Endothelial cell of umbilical vein (primary cell): ENCODE measurements at regions of chr2 and their contacts with region 1.

Region 1: GRCh38 chr2:36461039-36461681 is 105.6 kb downstream of the CRIM1 start:
- DNase-seq: peak; percentile 93
- H3K4me3 ChIP-seq: peak overlapping the region in 1 of 3 experiments; percentile 30
- H3K27ac ChIP-seq: peak overlapping the region; percentile 98
- H3K4me1 ChIP-seq: peaks cover 97% of the 10 kb centered on the region
- H3K27me3 ChIP-seq: no peaks in the 10 kb centered on the region
- CTCF ChIP-seq: no peak
- POLR2A ChIP-seq: peak; percentile 15

Region 2: DNA sequence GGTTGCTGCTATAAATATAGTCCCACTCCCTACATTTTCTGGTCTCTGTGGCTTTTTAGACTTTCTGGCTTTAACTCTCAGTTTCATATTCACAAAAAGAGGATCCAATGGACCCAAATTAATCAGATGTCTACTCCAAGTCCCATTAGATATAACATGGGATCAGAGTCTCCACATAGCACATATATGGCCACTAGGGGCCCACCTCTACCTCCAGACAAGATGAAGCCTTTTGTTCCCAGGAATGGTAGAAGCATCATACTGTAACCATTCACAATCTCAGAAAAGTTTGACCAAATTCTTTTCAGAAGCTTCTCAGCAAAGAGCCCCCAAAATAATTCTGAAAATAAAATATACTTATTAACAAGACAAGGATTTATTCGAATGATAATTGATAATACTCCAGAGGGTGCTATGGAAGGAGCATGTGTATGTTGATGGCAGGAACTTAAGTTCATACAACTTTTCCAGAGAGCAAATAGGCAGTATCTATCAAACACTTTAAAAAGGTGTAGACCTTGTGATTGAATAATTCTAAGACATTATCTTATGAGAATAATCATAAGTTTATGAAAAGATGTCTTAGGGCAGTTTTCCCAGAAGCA is 487.9 kb before region 1 on chr2:
- CTCF ChIA-PET with region 1: no interaction called
- POLR2A ChIA-PET with region 1: no interaction called
- dilution Hi-C with region 1: no loop called
- intact Hi-C with region 1: loop called (anchors 10 kb)
- DNase-seq: peak; percentile 78
- H3K4me3 ChIP-seq: no peak overlapping the region
- H3K27ac ChIP-seq: peak overlapping the region; percentile 64
- H3K4me1 ChIP-seq: peaks cover 8% of the 10 kb centered on the region
- H3K27me3 ChIP-seq: no peaks in the 10 kb centered on the region
- CTCF ChIP-seq: peak; percentile 45 to 67
- POLR2A ChIP-seq: no peak

Region 3: GRCh38 chr2:36376319-36376765 is 84.8 kb before region 1 on chr2:
- CTCF ChIA-PET with region 1: interaction called, 41 read pairs
- POLR2A ChIA-PET with region 1: interaction called, 3 read pairs
- dilution Hi-C with region 1: no loop called
- intact Hi-C with region 1: loop called (anchors 2 kb)
- DNase-seq: peak; percentile 65
- H3K4me3 ChIP-seq: no peak overlapping the region
- H3K27ac ChIP-seq: peak overlapping the region; percentile 44
- H3K4me1 ChIP-seq: peaks cover 98% of the 10 kb centered on the region
- H3K27me3 ChIP-seq: no peaks in the 10 kb centered on the region
- CTCF ChIP-seq: no peak
- POLR2A ChIP-seq: no peak

Region 4: DNA sequence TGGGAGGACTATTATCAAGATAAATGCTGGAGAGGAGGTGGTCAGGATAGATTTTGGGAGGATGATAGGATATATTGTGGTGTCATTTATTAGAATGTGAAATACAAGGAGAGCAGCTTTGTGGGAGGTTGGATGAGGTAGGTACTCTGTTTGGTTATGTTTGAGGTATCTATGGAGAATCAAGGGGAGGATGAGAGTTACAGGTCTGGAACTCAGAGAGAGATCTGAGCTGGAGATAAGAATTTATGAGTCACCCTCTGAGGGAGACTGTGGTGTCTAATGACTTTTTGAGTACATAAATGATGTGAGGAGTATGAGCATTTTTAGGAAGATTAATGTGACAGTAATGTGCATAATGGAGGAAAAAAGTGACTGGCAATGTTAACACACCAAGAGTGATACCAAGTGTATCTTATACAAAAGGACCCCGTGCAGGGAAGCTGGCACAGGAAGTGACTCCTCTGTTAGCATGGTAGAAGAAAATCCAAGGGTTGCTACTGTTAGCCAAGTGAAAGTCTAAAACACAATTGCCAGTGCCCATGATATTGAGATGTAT is 57.4 kb before region 1 on chr2:
- CTCF ChIA-PET with region 1: interaction called, 16 read pairs
- POLR2A ChIA-PET with region 1: no interaction called
- dilution Hi-C with region 1: no loop called
- intact Hi-C with region 1: loop called (anchors 1 kb)
- DNase-seq: peak; percentile 79
- H3K4me3 ChIP-seq: no peak overlapping the region
- H3K27ac ChIP-seq: peak overlapping the region; percentile 92
- H3K4me1 ChIP-seq: peaks cover 96% of the 10 kb centered on the region
- H3K27me3 ChIP-seq: no peaks in the 10 kb centered on the region
- CTCF ChIP-seq: no peak
- POLR2A ChIP-seq: peak; percentile 64

Region 5: GRCh38 chr2:36433311-36434217 is 27.6 kb before region 1 on chr2:
- CTCF ChIA-PET with region 1: interaction called, 14 read pairs
- POLR2A ChIA-PET with region 1: interaction called, 3 read pairs
- dilution Hi-C with region 1: no loop called
- intact Hi-C with region 1: no loop called
- DNase-seq: no peak
- H3K4me3 ChIP-seq: no peak overlapping the region
- H3K27ac ChIP-seq: no peak overlapping the region
- H3K4me1 ChIP-seq: peaks cover 89% of the 10 kb centered on the region
- H3K27me3 ChIP-seq: no peaks in the 10 kb centered on the region
- CTCF ChIP-seq: no peak
- POLR2A ChIP-seq: peak; percentile 4

Region 6: DNA sequence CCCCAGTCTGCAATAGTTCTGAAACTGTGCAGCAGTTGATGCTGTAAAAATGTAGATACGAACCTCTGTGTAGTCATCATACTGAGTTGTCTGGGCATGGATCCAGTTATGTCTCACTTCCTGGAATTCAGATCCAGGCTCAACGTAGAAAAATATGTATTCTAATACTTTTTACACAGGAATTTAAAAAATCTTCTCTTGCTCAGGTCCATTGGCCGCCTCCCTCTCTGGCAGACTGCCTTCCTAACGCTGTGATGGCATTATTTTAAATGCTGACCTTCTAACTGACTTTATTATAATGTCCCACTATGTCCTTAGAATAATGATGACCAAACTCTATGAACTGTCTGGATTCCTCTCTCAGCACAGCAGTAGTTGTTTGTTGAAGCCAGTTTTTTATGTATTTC is 17.2 kb after region 1 on chr2:
- CTCF ChIA-PET with region 1: interaction called, 24 read pairs
- POLR2A ChIA-PET with region 1: no interaction called
- dilution Hi-C with region 1: no loop called
- intact Hi-C with region 1: loop called (anchors 1 kb)
- DNase-seq: peak; percentile 96
- H3K4me3 ChIP-seq: no peak overlapping the region
- H3K27ac ChIP-seq: peak overlapping the region; percentile 82
- H3K4me1 ChIP-seq: peaks cover 73% of the 10 kb centered on the region
- H3K27me3 ChIP-seq: no peaks in the 10 kb centered on the region
- CTCF ChIP-seq: no peak
- POLR2A ChIP-seq: no peak

Region 7: GRCh38 chr2:36507408-36507812 is 46.2 kb after region 1 on chr2:
- CTCF ChIA-PET with region 1: interaction called, 11 read pairs
- POLR2A ChIA-PET with region 1: no interaction called
- dilution Hi-C with region 1: no loop called
- intact Hi-C with region 1: no loop called
- DNase-seq: peak; percentile 64
- H3K4me3 ChIP-seq: no peak overlapping the region
- H3K27ac ChIP-seq: no peak overlapping the region
- H3K4me1 ChIP-seq: no peaks in the 10 kb centered on the region
- H3K27me3 ChIP-seq: no peaks in the 10 kb centered on the region
- CTCF ChIP-seq: peak; percentile 68 to 75
- POLR2A ChIP-seq: no peak